Endothelial cell of umbilical vein (primary cell): ENCODE measurements at regions of chr4 and their contacts with region 1.

Region 1: DNA sequence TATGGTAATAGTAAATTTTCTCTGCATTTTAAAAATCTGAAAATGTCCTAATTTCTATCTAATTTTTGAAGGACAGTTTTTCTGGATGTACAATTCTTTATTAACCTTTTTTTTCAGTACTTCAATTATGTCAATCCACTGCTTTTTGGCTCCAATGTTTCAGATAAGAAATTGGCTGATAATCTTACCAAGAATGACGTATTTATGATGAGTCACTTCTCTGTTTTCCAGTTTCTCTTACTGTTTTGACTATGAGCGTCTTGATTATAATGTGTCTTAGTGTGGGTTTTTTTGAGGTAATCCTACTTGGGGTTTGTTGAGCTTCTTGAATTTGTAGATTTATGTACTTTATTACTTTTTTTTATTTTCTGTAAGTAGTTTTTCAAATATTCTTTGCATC is 47.2 kb downstream of the UGT2B11 start:
- DNase-seq: no peak
- H3K4me3 ChIP-seq: no peak overlapping the region
- H3K27ac ChIP-seq: no peak overlapping the region
- H3K4me1 ChIP-seq: no peaks in the 10 kb centered on the region
- H3K27me3 ChIP-seq: no peaks in the 10 kb centered on the region
- CTCF ChIP-seq: no peak
- POLR2A ChIP-seq: no peak

Region 2: GRCh38 chr4:68271851-68272756 is 895.2 kb before region 1 on chr4:
- CTCF ChIA-PET with region 1: interaction called, 3 read pairs
- POLR2A ChIA-PET with region 1: no interaction called
- dilution Hi-C with region 1: no loop called
- intact Hi-C with region 1: loop called (anchors 5 kb)
- DNase-seq: peak; percentile 73
- H3K4me3 ChIP-seq: no peak overlapping the region
- H3K27ac ChIP-seq: no peak overlapping the region
- H3K4me1 ChIP-seq: no peaks in the 10 kb centered on the region
- H3K27me3 ChIP-seq: peaks cover 10 to 15% of the 10 kb centered on the region in 2 experiments
- CTCF ChIP-seq: peak; percentile 37 to 42
- POLR2A ChIP-seq: no peak

Region 3: GRCh38 chr4:68498413-68499007 is 668.8 kb before region 1 on chr4:
- CTCF ChIA-PET with region 1: interaction called, 26 read pairs
- POLR2A ChIA-PET with region 1: no interaction called
- dilution Hi-C with region 1: no loop called
- intact Hi-C with region 1: loop called (anchors 1 kb)
- DNase-seq: peak; percentile 69
- H3K4me3 ChIP-seq: no peak overlapping the region
- H3K27ac ChIP-seq: no peak overlapping the region
- H3K4me1 ChIP-seq: no peaks in the 10 kb centered on the region
- H3K27me3 ChIP-seq: peaks cover 0 to 2% of the 10 kb centered on the region in 2 experiments
- CTCF ChIP-seq: peak; percentile 54 to 67
- POLR2A ChIP-seq: no peak

Region 4: GRCh38 chr4:69054578-69055200 is 112.6 kb before region 1 on chr4:
- CTCF ChIA-PET with region 1: interaction called, 12 read pairs
- POLR2A ChIA-PET with region 1: no interaction called
- dilution Hi-C with region 1: no loop called
- intact Hi-C with region 1: no loop called
- DNase-seq: peak; percentile 92
- H3K4me3 ChIP-seq: no peak overlapping the region
- H3K27ac ChIP-seq: peak overlapping the region; percentile 93
- H3K4me1 ChIP-seq: peaks cover 9% of the 10 kb centered on the region
- H3K27me3 ChIP-seq: no peaks in the 10 kb centered on the region
- CTCF ChIP-seq: no peak
- POLR2A ChIP-seq: no peak

Region 5: GRCh38 chr4:69060651-69061308 is 106.5 kb before region 1 on chr4:
- CTCF ChIA-PET with region 1: interaction called, 44 read pairs
- POLR2A ChIA-PET with region 1: no interaction called
- dilution Hi-C with region 1: no loop called
- intact Hi-C with region 1: loop called (anchors 1 kb)
- DNase-seq: peak; percentile 38
- H3K4me3 ChIP-seq: no peak overlapping the region
- H3K27ac ChIP-seq: no peak overlapping the region
- H3K4me1 ChIP-seq: no peaks in the 10 kb centered on the region
- H3K27me3 ChIP-seq: no peaks in the 10 kb centered on the region
- CTCF ChIP-seq: peak in 1 of 2 donors; percentile 17
- POLR2A ChIP-seq: no peak

Region 6: DNA sequence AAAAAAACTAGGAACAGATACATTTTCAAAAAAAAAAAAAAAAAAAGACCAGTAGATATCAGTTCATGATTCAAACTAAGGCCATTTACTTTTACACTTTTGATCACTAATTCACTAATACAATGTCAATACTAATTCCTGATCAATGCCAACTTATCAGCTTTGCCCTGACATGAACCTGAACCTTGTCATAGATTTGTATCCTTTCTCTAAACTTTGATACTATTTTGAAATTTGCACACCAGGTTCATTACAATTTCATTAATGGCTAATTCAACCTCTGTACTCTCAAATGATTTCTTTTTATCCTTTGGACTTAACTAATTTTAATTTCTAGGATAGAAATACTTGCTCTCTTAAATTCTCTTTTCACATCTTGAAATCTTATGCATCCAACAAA is 33.3 kb before region 1 on chr4:
- CTCF ChIA-PET with region 1: no interaction called
- POLR2A ChIA-PET with region 1: no interaction called
- dilution Hi-C with region 1: no loop called
- intact Hi-C with region 1: no loop called
- DNase-seq: no peak
- H3K4me3 ChIP-seq: no peak overlapping the region
- H3K27ac ChIP-seq: no peak overlapping the region
- H3K4me1 ChIP-seq: no peaks in the 10 kb centered on the region
- H3K27me3 ChIP-seq: no peaks in the 10 kb centered on the region
- CTCF ChIP-seq: no peak
- POLR2A ChIP-seq: no peak